ENCODE measurements at regions of chr6 and their contacts with region 1.

Region 1: GRCh38 chr6:73329201-73329600 is 24.9 kb downstream of the DPPA5 start:
- DNase-seq: no peak
- H3K4me3 ChIP-seq: no peak overlapping the region
- H3K27ac ChIP-seq: no peak overlapping the region
- H3K27me3 ChIP-seq: no peaks in the 10 kb centered on the region
- CTCF ChIP-seq: no peak

Region 2: DNA sequence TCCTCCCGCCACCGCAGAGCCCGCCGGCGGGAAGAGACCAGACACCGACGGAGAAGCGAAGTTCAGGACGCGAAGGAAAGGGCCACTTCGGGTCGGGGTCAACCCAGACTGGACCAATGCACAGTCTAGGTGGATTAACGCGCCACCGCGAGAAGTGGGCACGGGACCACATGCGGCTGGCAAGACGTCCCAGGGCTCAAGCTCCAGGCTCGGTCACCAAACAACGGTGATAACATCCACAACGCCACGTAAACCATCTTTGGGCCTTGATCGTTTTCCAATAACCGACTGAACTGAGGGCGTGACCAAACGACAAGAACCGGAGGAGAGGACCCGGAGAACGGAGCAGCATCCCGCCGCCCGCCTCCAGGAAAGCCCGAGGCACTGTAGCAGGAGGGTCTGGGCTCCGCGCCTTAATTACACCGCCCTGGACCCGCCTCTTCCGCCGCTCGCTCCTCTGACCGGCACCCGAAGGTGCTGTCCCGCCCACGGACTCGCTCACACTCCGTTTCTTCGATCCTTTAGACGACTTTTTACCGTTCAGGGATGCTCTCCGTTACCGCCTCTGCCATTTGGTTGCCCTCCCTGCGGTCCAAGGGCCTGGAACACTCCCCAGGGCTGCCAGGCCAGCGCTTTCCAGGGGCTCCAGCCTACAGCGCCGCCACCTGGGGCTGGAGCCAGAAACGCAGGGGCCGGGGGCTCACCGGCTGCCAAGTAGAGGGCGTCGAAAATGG is 19.3 kb before region 1 on chr6:
- CTCF ChIA-PET with region 1: interaction called, 24 read pairs
- POLR2A ChIA-PET with region 1: interaction called, 4 read pairs
- DNase-seq: no peak
- H3K4me3 ChIP-seq: peak overlapping the region; percentile 90
- H3K27ac ChIP-seq: peak overlapping the region; percentile 73
- H3K27me3 ChIP-seq: no peaks in the 10 kb centered on the region
- CTCF ChIP-seq: peak; percentile 74

Region 3: GRCh38 chr6:73388800-73389512 is 59.8 kb after region 1 on chr6:
- CTCF ChIA-PET with region 1: interaction called, 18 read pairs
- POLR2A ChIA-PET with region 1: no interaction called
- DNase-seq: peak; percentile 18
- H3K4me3 ChIP-seq: peak overlapping the region; percentile 65
- H3K27ac ChIP-seq: peak overlapping the region; percentile 31
- H3K27me3 ChIP-seq: no peaks in the 10 kb centered on the region
- CTCF ChIP-seq: peak; percentile 88

Region 4: DNA sequence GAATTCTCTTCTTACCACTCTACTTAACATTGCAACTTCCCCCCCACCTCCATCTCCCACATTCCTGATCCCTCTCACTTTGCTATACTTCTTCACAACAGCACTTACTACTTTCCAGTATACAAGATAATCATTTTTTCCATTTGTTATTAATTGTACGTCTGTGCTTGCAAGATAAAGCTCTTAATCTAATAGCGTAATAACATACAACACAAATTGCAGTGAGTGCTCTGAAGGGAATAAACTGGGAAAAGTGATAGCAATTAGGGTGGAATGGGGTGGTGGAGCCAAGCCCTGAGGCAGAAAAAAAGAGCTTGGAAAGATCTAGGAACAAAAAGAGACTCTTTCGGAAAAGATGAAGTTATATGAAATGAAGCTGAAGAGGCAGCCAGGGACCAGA is 114.4 kb after region 1 on chr6:
- CTCF ChIA-PET with region 1: no interaction called
- POLR2A ChIA-PET with region 1: no interaction called
- DNase-seq: no peak
- H3K4me3 ChIP-seq: no peak overlapping the region
- H3K27ac ChIP-seq: no peak overlapping the region
- H3K27me3 ChIP-seq: no peaks in the 10 kb centered on the region
- CTCF ChIP-seq: no peak

Region 5: DNA sequence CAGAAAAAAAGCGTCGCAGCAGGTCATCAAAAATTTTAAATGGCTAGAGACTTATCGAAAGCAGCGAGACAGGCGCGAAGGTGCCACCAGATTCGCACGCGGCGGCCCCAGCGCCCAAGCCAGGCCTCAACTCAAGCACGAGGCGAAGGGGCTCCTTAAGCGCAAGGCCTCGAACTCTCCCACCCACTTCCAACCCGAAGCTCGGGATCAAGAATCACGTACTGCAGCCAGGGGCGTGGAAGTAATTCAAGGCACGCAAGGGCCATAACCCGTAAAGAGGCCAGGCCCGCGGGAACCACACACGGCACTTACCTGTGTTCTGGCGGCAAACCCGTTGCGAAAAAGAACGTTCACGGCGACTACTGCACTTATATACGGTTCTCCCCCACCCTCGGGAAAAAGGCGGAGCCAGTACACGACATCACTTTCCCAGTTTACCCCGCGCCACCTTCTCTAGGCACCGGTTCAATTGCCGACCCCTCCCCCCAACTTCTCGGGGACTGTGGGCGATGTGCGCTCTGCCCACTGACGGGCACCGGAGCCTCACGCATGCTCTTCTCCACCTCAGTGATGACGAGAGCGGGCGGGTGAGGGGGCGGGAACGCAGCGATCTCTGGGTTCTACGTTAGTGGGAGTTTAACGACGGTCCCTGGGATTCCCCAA is 191.6 kb after region 1 on chr6 and contains the start of gene EEF1A1:
- CTCF ChIA-PET with region 1: no interaction called
- POLR2A ChIA-PET with region 1: no interaction called
- DNase-seq: peak; percentile 100
- H3K4me3 ChIP-seq: peak within 1 kb of the TSS; percentile 99
- H3K27ac ChIP-seq: peak within 1 kb of the TSS; percentile 100
- H3K27me3 ChIP-seq: no peaks in the 10 kb centered on the region
- CTCF ChIP-seq: no peak
- polyA plus RNA-seq, gene EEF1A1: 24,076 and 25,115 TPM in 2 replicates